Heart left ventricle (tissue), 16 donors: ENCODE measurements at regions of chr18 and their contacts with region 1.

Region 1: DNA sequence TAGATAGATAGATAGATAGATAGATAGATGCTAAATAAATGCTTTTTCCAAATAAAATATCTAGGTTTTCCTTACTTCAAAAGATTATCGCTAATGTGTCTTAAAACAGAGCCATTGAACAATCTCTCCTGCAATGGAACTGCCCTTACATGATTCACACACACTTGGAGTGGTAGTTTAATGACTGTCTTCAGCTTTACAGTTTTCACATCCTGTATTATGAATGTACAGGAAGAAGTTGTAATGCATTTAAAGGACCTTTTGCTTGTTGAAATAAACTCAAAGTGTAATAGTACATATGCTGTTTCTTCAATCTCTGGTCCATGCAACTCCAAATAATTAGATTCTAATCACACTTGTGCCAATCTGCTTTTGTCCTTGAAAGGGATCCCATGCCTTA is 797.6 kb upstream of the CDH2 start:
- DNase-seq: no peak
- ATAC-seq: no peak
- H3K4me3 ChIP-seq: no peak overlapping the region
- H3K27ac ChIP-seq: no peak overlapping the region
- H3K4me1 ChIP-seq: no peaks in the 10 kb centered on the region
- H3K27me3 ChIP-seq: no peaks in the 10 kb centered on the region
- CTCF ChIP-seq: no peak
- POLR2A ChIP-seq: no peak

Region 2: DNA sequence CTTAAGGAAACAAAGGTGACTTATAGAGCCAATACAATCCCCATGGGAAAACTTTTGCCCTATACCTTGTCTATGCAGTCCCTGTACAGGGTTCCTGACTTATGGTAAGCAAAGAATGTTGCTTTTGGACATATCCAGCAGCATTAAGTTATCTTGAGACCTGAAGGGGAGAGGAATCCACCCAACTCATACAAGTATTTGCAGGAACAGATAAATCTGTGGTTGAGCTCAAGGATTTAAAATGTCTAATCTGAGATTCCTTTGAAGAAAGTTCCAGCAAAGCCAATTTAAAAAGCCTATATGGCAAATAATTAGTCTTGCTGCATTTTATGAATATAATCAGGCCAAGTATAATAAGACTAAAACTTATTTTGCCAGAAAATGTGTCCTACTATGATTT is 58.0 kb before region 1 on chr18:
- intact Hi-C with region 1: loop called in 1 of 10 experiments (anchors 10 kb)
- DNase-seq: no peak
- ATAC-seq: no peak
- H3K4me3 ChIP-seq: no peak overlapping the region
- H3K27ac ChIP-seq: no peak overlapping the region
- H3K4me1 ChIP-seq: no peaks in the 10 kb centered on the region
- H3K27me3 ChIP-seq: no peaks in the 10 kb centered on the region
- CTCF ChIP-seq: no peak
- POLR2A ChIP-seq: no peak

Region 3: GRCh38 chr18:29034113-29034856 is 59.8 kb after region 1 on chr18:
- intact Hi-C with region 1: loop called in 1 of 10 experiments (anchors 10 kb)
- DNase-seq: no peak
- ATAC-seq: no peak
- H3K4me3 ChIP-seq: no peak overlapping the region
- H3K27ac ChIP-seq: no peak overlapping the region
- H3K4me1 ChIP-seq: no peaks in the 10 kb centered on the region
- H3K27me3 ChIP-seq: no peaks in the 10 kb centered on the region
- CTCF ChIP-seq: no peak
- POLR2A ChIP-seq: no peak